ENCODE measurements at regions of chr2 and their contacts with region 1.

Region 1: DNA sequence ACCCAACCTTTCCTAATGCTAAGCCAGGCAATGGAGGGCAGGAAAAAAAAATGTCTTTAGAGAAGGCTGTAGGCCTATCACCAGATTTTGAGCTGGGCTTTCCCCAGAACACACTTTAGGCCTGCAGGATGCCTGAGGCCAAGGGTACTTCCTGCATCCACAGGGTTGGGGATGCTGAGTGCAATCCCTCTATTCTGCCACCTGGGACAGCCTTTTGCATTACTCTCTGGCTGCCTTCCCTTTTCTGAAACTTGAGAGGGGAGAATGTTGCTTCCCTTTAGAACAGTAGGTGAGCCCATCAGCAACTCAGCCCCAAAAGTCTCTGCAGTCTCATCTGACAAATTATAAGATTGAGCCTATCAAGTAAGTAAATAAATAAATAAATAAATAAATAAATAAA is 195.2 kb downstream of the SLC8A1 start:
- DNase-seq: peak; percentile 55
- H3K4me3 ChIP-seq: no peak overlapping the region
- H3K27ac ChIP-seq: no peak overlapping the region
- H3K4me1 ChIP-seq: peaks cover 40% of the 10 kb centered on the region
- CTCF ChIP-seq: peak; percentile 56

Region 2: GRCh38 chr2:40016151-40016885 is 240.3 kb before region 1 on chr2:
- CTCF ChIA-PET with region 1: no interaction called
- POLR2A ChIA-PET with region 1: no interaction called
- intact Hi-C with region 1: no loop called
- DNase-seq: no peak
- H3K4me3 ChIP-seq: no peak overlapping the region
- H3K27ac ChIP-seq: no peak overlapping the region
- H3K4me1 ChIP-seq: no peaks in the 10 kb centered on the region
- CTCF ChIP-seq: no peak

Region 3: GRCh38 chr2:40238764-40239163 is 17.9 kb before region 1 on chr2:
- CTCF ChIA-PET with region 1: no interaction called
- POLR2A ChIA-PET with region 1: no interaction called
- intact Hi-C with region 1: no loop called
- DNase-seq: no peak
- H3K4me3 ChIP-seq: no peak overlapping the region
- H3K27ac ChIP-seq: no peak overlapping the region
- H3K4me1 ChIP-seq: peaks cover under 1% of the 10 kb centered on the region
- CTCF ChIP-seq: no peak

Region 4: DNA sequence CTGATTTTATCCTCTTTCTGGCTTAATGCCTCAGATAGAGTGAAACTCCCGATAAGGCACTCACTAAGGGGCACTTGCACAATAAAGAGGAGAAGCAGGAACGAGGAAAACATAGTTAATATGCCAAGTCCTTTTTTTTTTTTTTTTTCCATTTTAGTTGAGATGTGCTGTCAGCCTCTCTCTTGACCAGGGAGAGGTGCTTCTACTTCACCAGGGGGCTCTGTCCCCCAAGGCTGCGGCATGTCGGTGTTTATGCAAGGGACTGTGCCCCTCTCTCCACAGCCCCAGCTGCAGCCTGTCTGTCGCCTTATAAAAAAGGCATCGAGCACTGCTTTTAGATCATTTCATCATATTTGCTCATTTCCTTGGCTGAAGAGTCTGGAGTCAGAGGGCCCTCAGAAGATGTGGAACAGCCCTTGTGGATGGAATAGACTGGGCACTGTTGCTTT is 17.1 kb after region 1 on chr2:
- CTCF ChIA-PET with region 1: no interaction called
- POLR2A ChIA-PET with region 1: interaction called, 12 read pairs
- intact Hi-C with region 1: no loop called
- DNase-seq: no peak
- H3K4me3 ChIP-seq: no peak overlapping the region
- H3K27ac ChIP-seq: no peak overlapping the region
- H3K4me1 ChIP-seq: peaks cover 43% of the 10 kb centered on the region
- CTCF ChIP-seq: no peak